Left cardiac atrium (tissue), 4 donors: ENCODE measurements at regions of chr1 and their contacts with region 1.

Region 1: DNA sequence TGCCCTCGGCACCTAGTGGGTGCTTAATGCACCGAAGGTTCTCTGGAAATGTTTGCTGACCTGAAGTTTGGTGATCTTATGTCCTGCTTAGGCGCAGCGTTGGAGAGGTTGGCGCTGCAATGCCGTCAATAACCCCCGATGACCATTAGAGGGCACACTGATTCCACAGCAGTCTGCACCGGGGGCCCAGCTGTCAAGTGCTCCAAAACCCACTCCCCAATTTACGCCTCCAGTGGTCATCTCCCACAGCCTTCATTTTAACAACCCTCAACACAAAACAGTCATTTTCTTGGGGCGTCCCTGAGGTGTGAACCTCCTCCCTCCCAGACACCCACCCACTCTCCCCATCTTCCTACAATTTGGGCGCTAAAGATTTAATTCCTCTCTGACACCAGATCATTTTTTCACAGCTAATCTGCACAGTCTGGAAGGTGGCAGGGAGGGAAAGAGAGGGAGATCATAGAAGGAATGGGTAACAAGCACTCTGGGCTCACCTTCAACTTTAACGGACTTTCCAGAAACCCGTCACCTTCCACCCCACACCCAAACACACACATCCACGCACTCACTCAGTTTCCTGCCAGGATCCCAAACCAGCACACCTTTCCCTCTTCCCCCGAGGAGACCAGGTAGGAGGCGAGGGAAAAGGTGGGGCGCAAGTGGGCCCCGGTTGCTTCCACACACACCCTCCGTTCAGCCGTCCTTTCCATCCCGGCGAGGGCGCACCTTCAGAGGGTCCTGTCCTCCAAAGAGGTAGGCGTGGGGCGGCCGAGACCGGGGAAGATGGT is 576 bp upstream of the NPR1 start:
- DNase-seq: peak; percentile 58
- ATAC-seq: peak; percentile 64 to 66

Region 2: GRCh38 chr1:153749408-153750005 is 71.6 kb after region 1 on chr1:
- intact Hi-C with region 1: loop called (anchors 1 to 10 kb)
- DNase-seq: peak; percentile 86
- ATAC-seq: peak; percentile 92 to 95

Region 3: DNA sequence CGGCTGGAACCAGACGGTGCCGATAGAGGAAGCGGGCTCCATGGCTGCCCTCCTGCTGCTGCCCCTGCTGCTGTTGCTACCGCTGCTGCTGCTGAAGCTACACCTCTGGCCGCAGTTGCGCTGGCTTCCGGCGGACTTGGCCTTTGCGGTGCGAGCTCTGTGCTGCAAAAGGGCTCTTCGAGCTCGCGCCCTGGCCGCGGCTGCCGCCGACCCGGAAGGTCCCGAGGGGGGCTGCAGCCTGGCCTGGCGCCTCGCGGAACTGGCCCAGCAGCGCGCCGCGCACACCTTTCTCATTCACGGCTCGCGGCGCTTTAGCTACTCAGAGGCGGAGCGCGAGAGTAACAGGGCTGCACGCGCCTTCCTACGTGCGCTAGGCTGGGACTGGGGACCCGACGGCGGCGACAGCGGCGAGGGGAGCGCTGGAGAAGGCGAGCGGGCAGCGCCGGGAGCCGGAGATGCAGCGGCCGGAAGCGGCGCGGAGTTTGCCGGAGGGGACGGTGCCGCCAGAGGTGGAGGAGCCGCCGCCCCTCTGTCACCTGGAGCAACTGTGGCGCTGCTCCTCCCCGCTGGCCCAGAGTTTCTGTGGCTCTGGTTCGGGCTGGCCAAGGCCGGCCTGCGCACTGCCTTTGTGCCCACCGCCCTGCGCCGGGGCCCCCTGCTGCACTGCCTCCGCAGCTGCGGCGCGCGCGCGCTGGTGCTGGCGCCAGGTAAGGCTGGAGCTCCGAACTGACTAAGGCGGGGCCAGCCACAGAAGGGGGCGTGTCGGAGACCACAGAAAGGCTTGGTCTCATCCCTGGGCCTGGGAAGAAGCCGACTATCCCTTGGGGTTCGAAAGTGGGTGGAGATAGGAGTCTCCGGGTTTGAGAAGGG is 97.8 kb after region 1 on chr1:
- intact Hi-C with region 1: loop called (anchors 2 to 5 kb)
- DNase-seq: peak; percentile 75
- ATAC-seq: peak; percentile 51 to 64